ENCODE measurements at regions of chr14 and their contacts with region 1.

Region 1: GRCh38 chr14:103847451-103848188 is at the start of gene PPP1R13B:
- DNase-seq: peak; percentile 92 to 96
- H3K4me3 ChIP-seq: peak within 1 kb of the TSS; percentile 91
- H3K4me3 Mint-ChIP-seq: peak within 1 kb of the TSS; percentile 84
- H3K27ac Mint-ChIP-seq: peak within 1 kb of the TSS; percentile 45
- H3K4me1 ChIP-seq: peaks cover 6% of the 10 kb centered on the region
- H3K4me1 Mint-ChIP-seq: no peaks in the 10 kb centered on the region
- H3K27me3 ChIP-seq: no peaks in the 10 kb centered on the region
- H3K27me3 Mint-ChIP-seq: no peaks in the 10 kb centered on the region
- CTCF ChIP-seq: no peak
- total RNA-seq, gene PPP1R13B: 15.8 and 16.7 TPM in 2 replicates

Region 2: DNA sequence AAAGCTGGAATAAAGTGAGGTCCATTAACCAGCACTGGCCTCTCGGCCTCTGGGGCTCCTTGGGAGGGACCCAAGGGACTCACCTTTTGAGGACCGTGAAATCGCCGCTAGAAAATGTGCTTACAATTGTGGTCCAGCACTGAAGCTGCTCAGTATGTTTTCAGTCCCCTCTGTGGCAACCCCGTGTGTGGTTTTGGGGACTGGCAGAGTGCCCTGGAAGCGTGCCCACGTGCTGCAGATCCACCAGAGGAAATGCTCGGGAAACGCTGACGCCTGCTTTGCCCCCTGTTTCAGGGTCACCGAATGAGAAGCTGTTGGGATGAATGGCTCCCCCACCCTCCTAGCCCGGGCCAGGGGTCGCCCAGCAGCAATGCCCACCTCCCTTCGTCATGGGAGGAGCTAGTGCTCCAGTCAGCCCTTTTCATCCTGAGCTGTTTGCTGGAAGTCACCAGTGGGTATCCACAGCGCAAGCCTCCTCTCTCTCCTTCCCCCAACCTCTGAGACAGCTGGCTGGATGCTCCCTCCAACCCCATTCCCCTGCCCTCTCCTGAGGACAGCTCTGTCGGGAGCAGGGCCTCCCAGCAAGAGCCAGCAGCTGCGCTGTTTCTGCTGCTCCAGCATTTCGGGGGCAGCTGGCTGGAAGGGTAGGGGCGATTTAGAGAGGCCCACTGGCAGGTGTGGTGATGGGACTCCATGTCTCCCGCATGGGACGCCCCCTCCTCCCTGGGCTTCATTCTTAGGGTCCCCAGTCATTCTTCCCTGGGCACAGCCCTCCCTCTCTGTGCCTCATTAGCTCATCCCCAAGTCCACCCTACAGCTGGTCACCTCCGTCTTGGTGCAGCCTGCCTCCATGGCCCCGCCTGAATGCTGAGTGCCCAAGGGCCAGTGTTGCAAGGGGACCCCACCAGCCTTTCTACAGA is 33.0 kb after region 1 on chr14:
- CTCF ChIA-PET with region 1: no interaction called
- POLR2A ChIA-PET with region 1: no interaction called
- intact Hi-C with region 1: loop called (anchors 2 kb)
- DNase-seq: no peak
- H3K4me3 ChIP-seq: no peak overlapping the region
- H3K4me3 Mint-ChIP-seq: peak overlapping the region; percentile 48
- H3K27ac Mint-ChIP-seq: peak overlapping the region; percentile 72
- H3K4me1 ChIP-seq: peaks cover 20% of the 10 kb centered on the region
- H3K4me1 Mint-ChIP-seq: peaks cover 7% of the 10 kb centered on the region
- H3K27me3 ChIP-seq: no peaks in the 10 kb centered on the region
- H3K27me3 Mint-ChIP-seq: no peaks in the 10 kb centered on the region
- CTCF ChIP-seq: no peak

Region 3: DNA sequence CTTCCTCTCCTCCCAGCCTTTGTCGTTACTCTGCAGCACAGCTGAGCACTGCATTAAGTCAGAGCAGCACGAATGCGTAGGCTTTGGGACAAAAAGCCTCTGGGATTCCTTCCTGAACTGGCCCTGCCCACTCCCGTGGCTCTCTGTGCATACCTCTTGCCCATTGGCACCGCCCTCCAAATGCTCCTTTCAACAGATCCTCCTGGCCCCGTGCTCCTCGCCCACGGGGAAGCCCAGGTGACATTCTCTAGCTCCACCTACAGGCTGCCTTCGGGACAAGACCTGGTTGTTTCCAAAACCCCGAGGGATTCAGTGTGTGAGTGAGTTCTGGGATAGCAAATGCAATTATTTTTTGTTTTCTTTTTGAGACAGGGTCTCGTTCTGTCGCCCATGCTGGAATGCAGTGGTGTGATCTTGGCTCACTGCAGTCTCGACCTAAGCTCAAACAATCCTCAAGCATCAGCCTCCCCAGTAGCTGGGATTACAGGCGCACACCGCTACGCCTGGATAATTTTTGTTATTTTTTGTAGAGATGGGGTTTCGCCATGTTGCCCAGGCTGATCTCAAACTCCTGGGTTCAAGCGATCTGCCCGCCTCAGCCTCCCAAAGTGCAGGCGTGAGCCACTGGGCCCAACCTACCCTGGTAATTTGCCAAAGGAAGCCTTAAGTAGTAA is 62.8 kb after region 1 on chr14:
- CTCF ChIA-PET with region 1: no interaction called
- POLR2A ChIA-PET with region 1: no interaction called
- intact Hi-C with region 1: loop called (anchors 1 kb)
- DNase-seq: peak; percentile 80 to 84
- H3K4me3 ChIP-seq: no peak overlapping the region
- H3K4me3 Mint-ChIP-seq: peak overlapping the region; percentile 15
- H3K27ac Mint-ChIP-seq: peak overlapping the region; percentile 35
- H3K4me1 ChIP-seq: no peaks in the 10 kb centered on the region
- H3K4me1 Mint-ChIP-seq: peaks cover 6% of the 10 kb centered on the region
- H3K27me3 ChIP-seq: no peaks in the 10 kb centered on the region
- H3K27me3 Mint-ChIP-seq: no peaks in the 10 kb centered on the region
- CTCF ChIP-seq: peak; percentile 83 to 89

Region 4: DNA sequence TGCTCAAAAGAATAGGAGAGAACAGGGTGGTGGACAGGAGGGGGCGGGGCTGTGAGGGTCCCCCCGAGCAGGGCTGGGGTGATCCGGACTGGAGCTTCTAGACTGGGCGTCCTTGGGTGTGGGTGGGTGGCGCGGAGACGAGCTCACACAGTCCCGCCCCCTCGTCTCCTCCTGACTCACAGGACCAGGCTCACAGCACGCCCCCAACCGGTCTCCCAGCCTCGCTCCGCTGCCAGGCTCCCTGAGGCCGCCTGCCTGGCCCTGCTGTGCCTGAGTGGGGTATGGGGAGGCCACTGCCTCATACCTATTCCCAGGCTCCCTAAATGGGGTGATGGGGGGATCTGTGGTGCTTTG is 260.6 kb after region 1 on chr14:
- CTCF ChIA-PET with region 1: no interaction called
- POLR2A ChIA-PET with region 1: no interaction called
- intact Hi-C with region 1: no loop called
- DNase-seq: peak in 1 of 2 experiments; percentile 33
- H3K4me3 ChIP-seq: no peak overlapping the region
- H3K4me3 Mint-ChIP-seq: no peak overlapping the region
- H3K27ac Mint-ChIP-seq: no peak overlapping the region
- H3K4me1 ChIP-seq: no peaks in the 10 kb centered on the region
- H3K4me1 Mint-ChIP-seq: no peaks in the 10 kb centered on the region
- H3K27me3 ChIP-seq: no peaks in the 10 kb centered on the region
- H3K27me3 Mint-ChIP-seq: no peaks in the 10 kb centered on the region
- CTCF ChIP-seq: no peak

Measured in Caco-2 (cell line).